Left ventricle myocardium superior (tissue), 1 donor: ENCODE measurements at regions of chr5 and their contacts with region 1.

Region 1: DNA sequence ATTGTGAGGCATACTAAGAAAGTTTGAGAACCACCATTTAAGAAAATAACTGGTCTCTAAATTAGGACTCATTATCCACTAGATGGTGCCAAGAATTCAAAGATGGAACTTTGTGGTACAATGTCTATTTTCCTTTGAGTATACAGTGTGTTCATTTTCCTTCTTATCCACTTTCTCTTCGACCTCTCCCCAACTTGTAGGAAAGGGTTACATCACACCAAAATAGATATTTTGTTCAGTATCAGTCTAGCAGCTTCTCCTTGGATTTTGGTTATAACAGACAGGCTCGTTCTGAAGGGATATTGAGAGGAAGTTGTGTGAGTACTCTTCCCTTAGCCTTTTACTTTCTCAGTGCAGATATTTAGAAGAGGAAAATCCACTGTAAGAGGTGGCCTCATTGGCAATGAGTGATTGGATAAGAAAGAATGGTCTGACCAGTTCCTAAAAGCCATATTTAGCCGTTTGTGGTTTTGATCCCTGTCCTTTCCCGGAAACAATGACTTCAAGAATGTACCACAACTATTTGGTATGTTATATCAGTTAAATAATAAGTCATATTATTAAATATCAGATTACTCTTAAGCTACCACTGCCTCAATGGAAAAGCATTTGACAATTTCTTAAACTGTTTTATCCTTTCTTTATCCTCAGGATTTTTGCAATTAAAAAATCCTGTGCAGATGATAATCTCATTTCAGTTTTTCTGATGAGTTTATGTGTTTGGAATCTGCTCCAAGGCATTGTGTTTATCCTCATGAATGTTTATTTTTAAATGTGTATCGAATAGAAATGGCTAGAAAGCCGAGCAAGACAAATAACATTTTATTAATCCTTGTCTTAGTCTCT is 69.0 kb upstream of the GRAMD2B start:
- DNase-seq: no peak
- ATAC-seq: peak; percentile 83

Region 2: DNA sequence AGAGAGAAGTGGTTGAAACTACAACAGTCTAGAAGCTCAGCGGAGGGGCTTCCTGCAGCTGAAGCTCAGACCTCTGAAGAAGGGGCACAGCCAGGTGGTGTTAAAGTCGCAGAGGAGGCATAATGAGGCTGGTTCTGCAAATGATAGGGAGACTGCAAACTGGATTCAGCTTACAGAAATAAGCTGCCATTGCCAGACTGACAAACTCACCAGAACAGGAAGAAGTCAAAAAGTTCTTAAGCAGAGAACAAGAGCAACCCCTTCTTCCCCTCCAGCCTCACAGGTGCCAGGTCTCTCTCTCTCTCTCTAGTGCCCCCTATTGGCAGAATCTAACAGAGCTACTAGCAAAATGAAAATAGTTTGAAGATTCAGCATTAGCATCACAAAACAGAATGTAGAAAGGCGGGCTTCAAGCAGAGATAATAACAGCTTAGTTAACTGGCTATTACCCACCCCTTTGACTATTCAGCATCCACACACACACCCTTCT is 145.7 kb after region 1 on chr5:
- intact Hi-C with region 1: loop called (anchors 10 kb)
- DNase-seq: no peak
- ATAC-seq: no peak

Region 3: DNA sequence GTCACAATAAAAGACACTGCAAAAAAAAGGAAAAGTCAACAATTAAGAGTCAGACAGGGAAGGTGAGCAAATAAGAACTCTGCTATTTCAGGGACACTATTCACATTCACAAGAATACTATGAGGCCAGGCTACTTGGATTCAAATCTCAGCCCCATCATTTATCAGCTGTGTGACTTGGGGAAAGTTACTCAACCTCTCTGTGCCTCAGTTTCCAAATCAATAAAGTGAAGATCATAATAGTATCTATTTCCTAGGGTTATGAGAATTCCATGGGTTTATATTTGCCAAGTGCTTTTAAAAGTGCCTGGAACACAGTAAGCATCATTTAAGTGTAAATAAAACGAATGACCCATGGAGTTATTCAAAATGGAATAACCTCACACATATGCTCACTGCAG is 184.3 kb after region 1 on chr5:
- intact Hi-C with region 1: loop called (anchors 2 kb)
- DNase-seq: no peak
- ATAC-seq: no peak